Naive thymus-derived CD4-positive, alpha-beta T cell (primary cell): ENCODE measurements at regions of chr5 and their contacts with region 1.

Region 1: GRCh38 chr5:75336625-75337339 is at the start of gene HMGCR:
- DNase-seq: peak; percentile 82 to 97 (median 95)
- ATAC-seq: peak; percentile 96
- H3K4me3 ChIP-seq: peak within 1 kb of the TSS; percentile 85
- H3K4me3 Mint-ChIP-seq: no peak within 1 kb of the TSS
- H3K27ac ChIP-seq: peak within 1 kb of the TSS; percentile 83
- H3K27ac Mint-ChIP-seq: no peak within 1 kb of the TSS
- H3K4me1 ChIP-seq: peaks cover 8 to 10% of the 10 kb centered on the region in 2 donors
- H3K4me1 Mint-ChIP-seq: peaks cover 18 to 41% (median 37%) of the 10 kb centered on the region in 7 donors
- H3K27me3 ChIP-seq: no peaks in the 10 kb centered on the region
- H3K27me3 Mint-ChIP-seq: no peaks in the 10 kb centered on the region
- total RNA-seq, gene HMGCR: 38.8 to 57.3 (median 43.8) TPM

Region 2: GRCh38 chr5:73498057-73499008 is 1838.4 kb before region 1 on chr5 and contains the start of gene BTF3:
- CTCF ChIA-PET with region 1: no interaction called
- POLR2A ChIA-PET with region 1: no interaction called
- intact Hi-C with region 1: loop called in 1 of 2 experiments (anchors 2 kb)
- DNase-seq: peak; percentile 83 to 94 (median 91)
- ATAC-seq: peak; percentile 96
- H3K4me3 ChIP-seq: peak within 1 kb of the TSS; percentile 81
- H3K4me3 Mint-ChIP-seq: peak within 1 kb of the TSS; percentile 92 to 99 (median 97)
- H3K27ac ChIP-seq: peak within 1 kb of the TSS; percentile 93
- H3K27ac Mint-ChIP-seq: peak within 1 kb of the TSS; percentile 97 to 100 (median 99)
- H3K4me1 ChIP-seq: peaks cover 22 to 31% of the 10 kb centered on the region in 2 donors
- H3K4me1 Mint-ChIP-seq: peaks cover 26 to 57% (median 41%) of the 10 kb centered on the region in 7 donors
- H3K27me3 ChIP-seq: peaks cover 0 to 4% of the 10 kb centered on the region in 2 donors
- H3K27me3 Mint-ChIP-seq: peaks cover 4 to 15% (median 13%) of the 10 kb centered on the region in 5 donors
- total RNA-seq, gene BTF3: 557 to 758 (median 700) TPM

Region 3: DNA sequence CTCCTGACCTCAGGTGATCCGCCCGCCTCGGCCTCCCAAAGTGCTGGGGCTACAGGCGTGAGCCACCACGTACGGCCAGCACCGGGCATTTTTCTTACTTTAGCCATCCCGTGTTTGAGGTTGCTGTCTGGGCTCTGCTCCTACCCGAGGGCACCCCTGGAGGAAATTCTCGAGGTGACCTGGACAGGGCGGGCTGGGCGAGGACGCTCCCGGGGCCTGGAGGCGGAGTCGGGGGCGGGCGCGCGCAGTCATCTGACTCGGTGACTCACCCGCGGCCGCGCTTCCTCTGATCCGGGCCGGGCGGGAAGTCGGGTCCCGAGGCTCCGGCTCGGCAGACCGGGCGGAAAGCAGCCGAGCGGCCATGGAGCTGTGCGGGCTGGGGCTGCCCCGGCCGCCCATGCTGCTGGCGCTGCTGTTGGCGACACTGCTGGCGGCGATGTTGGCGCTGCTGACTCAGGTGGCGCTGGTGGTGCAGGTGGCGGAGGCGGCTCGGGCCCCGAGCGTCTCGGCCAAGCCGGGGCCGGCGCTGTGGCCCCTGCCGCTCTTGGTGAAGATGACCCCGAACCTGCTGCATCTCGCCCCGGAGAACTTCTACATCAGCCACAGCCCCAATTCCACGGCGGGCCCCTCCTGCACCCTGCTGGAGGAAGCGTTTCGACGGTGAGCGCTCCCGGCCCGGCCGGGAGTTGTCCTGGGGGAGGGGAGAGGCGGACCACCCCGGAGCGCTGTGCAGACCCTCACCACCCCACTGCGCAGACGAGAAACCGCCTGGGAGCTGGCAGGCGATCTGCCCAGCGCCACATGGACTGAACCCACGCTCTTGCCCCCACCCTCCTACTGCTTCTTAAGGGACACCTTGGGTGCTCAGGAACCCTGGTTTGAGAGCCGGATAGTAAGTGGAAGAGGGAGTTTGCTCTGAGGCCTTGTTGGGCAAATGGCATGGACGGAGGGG is 651.6 kb before region 1 on chr5 and contains the start of gene HEXB:
- CTCF ChIA-PET with region 1: no interaction called
- POLR2A ChIA-PET with region 1: interaction called, 3 read pairs
- intact Hi-C with region 1: loop called (anchors 1 kb)
- DNase-seq: peak; percentile 55 to 89 (median 69)
- ATAC-seq: peak; percentile 91
- H3K4me3 ChIP-seq: peak within 1 kb of the TSS; percentile 86
- H3K4me3 Mint-ChIP-seq: peak within 1 kb of the TSS; percentile 76 to 92 (median 86)
- H3K27ac ChIP-seq: peak within 1 kb of the TSS; percentile 78
- H3K27ac Mint-ChIP-seq: peak within 1 kb of the TSS; percentile 76 to 92 (median 86)
- H3K4me1 ChIP-seq: peaks cover 7 to 13% of the 10 kb centered on the region in 2 donors
- H3K4me1 Mint-ChIP-seq: peaks cover 16 to 34% (median 30%) of the 10 kb centered on the region in 7 donors
- H3K27me3 ChIP-seq: no peaks in the 10 kb centered on the region
- H3K27me3 Mint-ChIP-seq: peaks cover 0 to 17% (median 0%) of the 10 kb centered on the region in 5 donors
- total RNA-seq, gene HEXB: 37.7 to 88.9 (median 64.2) TPM

Region 4: DNA sequence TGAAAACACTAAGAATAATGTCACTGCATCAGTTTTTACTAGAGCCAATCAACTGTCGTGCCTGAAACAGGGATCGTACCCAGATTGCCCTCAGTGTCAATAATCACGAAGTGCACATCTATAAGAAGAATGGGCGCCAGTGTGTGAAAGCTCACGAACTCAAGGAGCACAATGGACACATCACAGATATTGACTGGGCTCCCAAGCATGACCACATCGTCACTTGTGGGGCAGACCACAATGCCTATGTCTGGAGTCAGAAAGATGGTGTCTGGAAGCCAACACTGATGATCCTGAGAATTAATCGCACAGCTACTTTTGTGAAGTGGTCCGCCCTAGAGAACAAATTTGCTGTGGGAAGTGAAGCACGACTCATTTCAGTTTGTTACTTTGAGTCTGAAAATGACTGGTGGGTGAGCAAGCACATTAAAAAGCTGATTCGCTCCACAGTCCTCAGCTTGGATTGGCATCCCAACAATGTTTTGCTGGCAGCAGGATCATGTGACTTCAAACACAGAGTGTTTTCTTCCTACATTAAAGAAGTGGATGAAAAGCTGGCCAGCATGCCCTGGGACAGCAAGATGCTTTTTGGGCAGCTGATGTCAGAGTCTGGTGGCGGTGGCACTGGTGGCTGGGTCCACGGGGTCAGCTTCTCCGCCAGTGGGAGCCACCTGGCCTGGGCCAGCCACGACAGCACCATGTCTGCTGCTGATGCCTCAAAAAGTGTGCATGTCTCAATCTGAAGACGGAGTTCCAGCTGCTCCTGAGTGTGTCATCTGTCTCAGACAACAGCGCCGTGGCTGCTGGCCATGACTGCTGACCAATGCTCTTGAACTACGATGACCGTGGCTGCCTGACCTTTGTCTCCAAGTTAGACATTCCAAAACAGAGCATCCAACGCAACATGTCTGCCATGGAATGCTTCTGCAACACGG is 537.5 kb before region 1 on chr5:
- CTCF ChIA-PET with region 1: no interaction called
- POLR2A ChIA-PET with region 1: no interaction called
- intact Hi-C with region 1: no loop called
- DNase-seq: no peak
- ATAC-seq: no peak
- H3K4me3 ChIP-seq: no peak overlapping the region
- H3K4me3 Mint-ChIP-seq: no peak overlapping the region
- H3K27ac ChIP-seq: no peak overlapping the region
- H3K27ac Mint-ChIP-seq: no peak overlapping the region
- H3K4me1 ChIP-seq: no peaks in the 10 kb centered on the region
- H3K4me1 Mint-ChIP-seq: no peaks in the 10 kb centered on the region
- H3K27me3 ChIP-seq: no peaks in the 10 kb centered on the region
- H3K27me3 Mint-ChIP-seq: no peaks in the 10 kb centered on the region

Region 5: GRCh38 chr5:74934949-74935751 is 401.6 kb before region 1 on chr5:
- CTCF ChIA-PET with region 1: interaction called, 3 read pairs
- POLR2A ChIA-PET with region 1: no interaction called
- intact Hi-C with region 1: loop called (anchors 5 kb)
- DNase-seq: peak in 8 of 9 donors; percentile 14 to 65 (median 44)
- ATAC-seq: peak; percentile 79
- H3K4me3 ChIP-seq: peak overlapping the region; percentile 34
- H3K4me3 Mint-ChIP-seq: peak overlapping the region; percentile 65 to 84 (median 76)
- H3K27ac ChIP-seq: peak overlapping the region; percentile 50
- H3K27ac Mint-ChIP-seq: peak overlapping the region; percentile 52 to 89 (median 85)
- H3K4me1 ChIP-seq: peaks cover 9 to 20% of the 10 kb centered on the region in 2 donors
- H3K4me1 Mint-ChIP-seq: peaks cover 13 to 50% (median 42%) of the 10 kb centered on the region in 7 donors
- H3K27me3 ChIP-seq: no peaks in the 10 kb centered on the region
- H3K27me3 Mint-ChIP-seq: peaks cover 0 to 6% (median 0%) of the 10 kb centered on the region in 5 donors

Region 6: DNA sequence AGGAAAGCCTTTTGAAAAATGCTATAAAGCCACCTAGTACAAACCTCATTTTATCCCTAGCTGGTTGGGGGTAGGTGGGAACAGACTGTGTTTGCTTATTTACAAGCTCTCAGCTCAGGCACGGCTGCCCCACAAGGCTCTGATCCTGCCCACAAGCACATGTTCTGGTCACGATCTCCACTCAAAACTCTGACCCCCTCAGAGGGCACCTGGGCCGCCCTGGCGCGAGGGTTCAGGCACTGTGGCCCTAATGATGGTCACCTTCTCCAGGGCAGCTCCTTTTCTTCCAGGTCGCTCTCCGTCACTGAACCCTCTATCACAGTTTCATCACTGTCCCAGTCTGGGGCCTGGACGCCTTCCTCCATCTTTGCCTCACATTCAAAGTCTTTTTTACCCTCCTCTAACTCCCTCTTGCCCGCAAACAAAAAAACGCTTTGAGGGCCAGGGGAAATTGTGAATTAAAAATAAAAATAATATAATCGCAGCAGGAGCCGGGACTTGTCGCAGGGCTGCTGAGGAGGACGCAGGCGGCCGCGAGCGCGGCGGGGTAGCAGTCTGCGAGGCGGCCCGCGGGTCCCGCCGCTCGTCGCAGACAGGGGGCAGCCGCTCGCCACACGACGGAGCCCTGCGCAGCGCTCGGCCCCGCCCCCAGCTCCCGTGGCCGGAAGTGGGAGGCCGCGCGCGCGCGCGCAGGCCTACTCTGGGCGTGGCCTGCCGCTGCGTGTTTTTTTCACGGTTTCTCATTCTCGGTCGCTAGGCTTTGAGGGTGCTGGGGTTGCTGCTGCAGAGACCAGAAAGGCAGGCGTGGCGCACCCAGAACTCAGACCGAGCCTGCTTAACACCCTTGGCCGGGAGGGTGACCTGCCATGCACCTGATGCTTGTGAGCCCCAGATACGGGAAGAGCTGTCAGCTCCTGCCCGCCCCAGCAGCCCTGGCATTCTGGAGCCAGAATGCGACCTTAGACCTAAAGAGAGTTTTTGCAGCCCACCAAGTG is 100.2 kb before region 1 on chr5 and contains the start of gene ANKRD31:
- CTCF ChIA-PET with region 1: interaction called, 3 read pairs
- POLR2A ChIA-PET with region 1: interaction called, 7 read pairs
- intact Hi-C with region 1: loop called (anchors 1 kb)
- DNase-seq: peak; percentile 83 to 97 (median 93)
- ATAC-seq: peak; percentile 100
- H3K4me3 ChIP-seq: peak within 1 kb of the TSS; percentile 69
- H3K4me3 Mint-ChIP-seq: peak within 1 kb of the TSS; percentile 78 to 99 (median 96)
- H3K27ac ChIP-seq: peak within 1 kb of the TSS; percentile 80
- H3K27ac Mint-ChIP-seq: peak within 1 kb of the TSS; percentile 89 to 99 (median 98)
- H3K4me1 ChIP-seq: peaks cover 0 to 17% of the 10 kb centered on the region in 2 donors
- H3K4me1 Mint-ChIP-seq: peaks cover 3 to 22% (median 18%) of the 10 kb centered on the region in 7 donors
- H3K27me3 ChIP-seq: no peaks in the 10 kb centered on the region
- H3K27me3 Mint-ChIP-seq: peaks cover 0 to 4% (median 0%) of the 10 kb centered on the region in 5 donors
- total RNA-seq, gene ANKRD31: 0.29 to 1.6 (median 0.93) TPM

Region 7: DNA sequence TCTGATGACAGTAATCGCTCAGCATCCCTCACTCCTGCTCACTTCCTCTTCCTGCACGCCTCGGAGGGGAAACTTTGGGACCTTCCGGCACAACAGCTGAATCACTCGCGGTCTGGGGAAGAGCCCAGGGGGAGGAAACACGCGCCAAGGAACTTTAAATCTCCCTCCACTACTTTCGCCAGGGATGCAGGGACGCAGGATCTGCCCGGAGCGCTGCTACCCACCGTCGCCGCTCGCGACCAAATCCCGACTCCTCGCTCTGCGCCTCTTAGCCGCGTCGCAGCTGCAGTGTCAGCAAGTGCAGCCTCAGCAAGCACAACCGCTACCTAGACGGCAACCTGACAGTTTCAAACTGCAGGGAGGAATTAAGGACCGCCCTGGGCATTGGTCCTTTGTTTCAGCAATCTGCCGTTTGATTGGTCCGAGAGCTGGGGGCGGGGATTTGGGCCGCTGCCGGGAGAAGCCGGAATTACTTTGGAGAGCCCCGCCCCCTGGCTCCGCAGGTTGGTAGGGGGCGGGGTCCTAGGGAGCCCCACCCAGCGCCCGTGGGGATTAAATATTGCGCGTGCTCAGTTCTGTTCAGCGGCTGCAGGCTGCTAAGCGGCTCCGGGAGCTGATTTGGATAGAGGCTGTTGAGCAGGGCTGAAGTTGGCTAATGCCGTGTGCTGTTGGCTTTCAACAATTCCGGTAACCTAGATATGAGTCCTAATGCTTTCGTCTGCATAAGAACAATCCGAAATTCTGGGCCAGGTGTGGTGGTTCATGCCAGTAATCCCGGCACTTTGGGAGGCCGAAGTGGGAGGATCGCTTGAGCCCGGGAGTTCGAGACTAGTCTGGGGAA is 380.5 kb after region 1 on chr5 and contains the start of gene POC5:
- CTCF ChIA-PET with region 1: no interaction called
- POLR2A ChIA-PET with region 1: no interaction called
- intact Hi-C with region 1: loop called (anchors 1 kb)
- DNase-seq: peak; percentile 93 to 99 (median 98)
- ATAC-seq: peak; percentile 97
- H3K4me3 ChIP-seq: peak within 1 kb of the TSS; percentile 74
- H3K4me3 Mint-ChIP-seq: peak within 1 kb of the TSS; percentile 93 to 100 (median 99)
- H3K27ac ChIP-seq: peak within 1 kb of the TSS; percentile 78
- H3K27ac Mint-ChIP-seq: peak within 1 kb of the TSS; percentile 92 to 100 (median 97)
- H3K4me1 ChIP-seq: peaks cover 5 to 8% of the 10 kb centered on the region in 2 donors
- H3K4me1 Mint-ChIP-seq: peaks cover 26 to 47% (median 37%) of the 10 kb centered on the region in 7 donors
- H3K27me3 ChIP-seq: no peaks in the 10 kb centered on the region
- H3K27me3 Mint-ChIP-seq: peaks cover 0 to 10% (median 0%) of the 10 kb centered on the region in 5 donors
- total RNA-seq, gene POC5: 8.5 to 17.9 (median 15.0) TPM

Region 8: DNA sequence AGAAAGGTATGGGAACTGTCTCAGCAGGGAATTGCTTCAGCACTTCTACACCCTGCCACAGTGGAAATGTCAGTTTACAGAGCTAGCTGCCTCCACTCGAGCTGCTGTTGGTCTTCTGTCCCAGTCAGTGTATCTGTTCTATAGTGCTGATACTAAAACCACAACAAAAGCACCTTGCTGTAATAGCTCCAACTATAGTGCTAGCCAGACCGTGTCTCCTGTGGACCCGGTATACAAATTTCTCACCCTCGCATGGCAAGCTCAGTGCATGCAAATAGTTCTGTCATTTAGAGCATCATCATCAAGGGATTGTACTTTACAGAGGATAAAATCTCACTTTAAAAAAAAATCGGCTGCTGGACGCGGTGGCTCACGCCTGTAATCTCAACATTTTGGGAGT is 1014.8 kb after region 1 on chr5:
- CTCF ChIA-PET with region 1: no interaction called
- POLR2A ChIA-PET with region 1: no interaction called
- intact Hi-C with region 1: no loop called
- DNase-seq: no peak
- ATAC-seq: peak; percentile 26
- H3K4me3 ChIP-seq: no peak overlapping the region
- H3K4me3 Mint-ChIP-seq: no peak overlapping the region
- H3K27ac ChIP-seq: no peak overlapping the region
- H3K27ac Mint-ChIP-seq: peak overlapping the region in 1 of 9 donors; percentile 32
- H3K4me1 ChIP-seq: no peaks in the 10 kb centered on the region
- H3K4me1 Mint-ChIP-seq: peaks cover 0 to 6% (median 0%) of the 10 kb centered on the region in 7 donors
- H3K27me3 ChIP-seq: no peaks in the 10 kb centered on the region
- H3K27me3 Mint-ChIP-seq: peaks cover 0 to 10% (median 0%) of the 10 kb centered on the region in 5 donors

Region 9: GRCh38 chr5:76958991-76959767 is 1622.4 kb after region 1 on chr5:
- CTCF ChIA-PET with region 1: no interaction called
- POLR2A ChIA-PET with region 1: no interaction called
- intact Hi-C with region 1: no loop called
- DNase-seq: no peak
- ATAC-seq: no peak
- H3K4me3 ChIP-seq: no peak overlapping the region
- H3K4me3 Mint-ChIP-seq: peak overlapping the region in 1 of 10 donors; percentile 1
- H3K27ac ChIP-seq: no peak overlapping the region
- H3K27ac Mint-ChIP-seq: no peak overlapping the region
- H3K4me1 ChIP-seq: no peaks in the 10 kb centered on the region
- H3K4me1 Mint-ChIP-seq: peaks cover 0 to 22% (median 4%) of the 10 kb centered on the region in 7 donors
- H3K27me3 ChIP-seq: no peaks in the 10 kb centered on the region
- H3K27me3 Mint-ChIP-seq: peaks cover 22 to 41% (median 27%) of the 10 kb centered on the region in 5 donors